MCF 10A (cell line): ENCODE measurements at regions of chr2 and their contacts with region 1.

Region 1: DNA sequence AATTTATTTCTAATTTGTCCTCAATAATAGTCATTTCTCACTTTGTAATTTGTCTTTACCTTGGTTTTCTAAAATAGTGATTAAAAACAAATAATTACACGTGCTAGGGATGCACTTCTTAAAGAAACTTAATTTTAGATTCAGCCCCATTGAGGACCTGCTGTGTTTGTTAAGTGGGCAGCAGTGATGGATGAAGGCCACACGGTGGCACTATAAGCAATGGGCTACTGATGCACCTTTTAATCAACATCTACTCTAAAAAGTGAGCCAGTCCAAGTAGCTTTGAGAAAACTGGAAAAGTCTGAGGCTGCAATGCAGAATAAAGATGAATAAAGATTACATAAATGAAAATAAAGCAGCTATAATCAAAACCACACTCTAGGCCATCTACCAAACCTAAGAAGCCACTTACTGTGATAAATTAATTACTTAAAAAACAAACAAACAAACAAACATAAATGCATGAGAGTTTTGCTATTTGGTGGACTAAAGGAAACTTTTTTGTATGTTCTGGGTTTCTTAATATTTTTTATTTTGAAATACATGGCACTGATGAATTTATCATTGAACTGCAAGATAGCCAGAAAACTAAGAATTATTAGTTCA is 89.3 kb downstream of the PDE11A start:
- DNase-seq: peak; percentile 76
- H3K4me3 Mint-ChIP-seq: no peak overlapping the region
- H3K27ac Mint-ChIP-seq: no peak overlapping the region
- H3K4me1 Mint-ChIP-seq: no peaks in the 10 kb centered on the region
- H3K27me3 Mint-ChIP-seq: peaks cover 26% of the 10 kb centered on the region
- CTCF ChIP-seq: peak; percentile 65

Region 2: GRCh38 chr2:177353187-177353478 is 630.2 kb before region 1 on chr2:
- CTCF ChIA-PET with region 1: no interaction called
- POLR2A ChIA-PET with region 1: no interaction called
- intact Hi-C with region 1: no loop called
- DNase-seq: no peak
- H3K4me3 Mint-ChIP-seq: no peak overlapping the region
- H3K27ac Mint-ChIP-seq: no peak overlapping the region
- H3K4me1 Mint-ChIP-seq: no peaks in the 10 kb centered on the region
- H3K27me3 Mint-ChIP-seq: no peaks in the 10 kb centered on the region
- CTCF ChIP-seq: no peak

Region 3: GRCh38 chr2:177812708-177813396 is 170.4 kb before region 1 on chr2:
- CTCF ChIA-PET with region 1: interaction called, 7 read pairs
- POLR2A ChIA-PET with region 1: no interaction called
- intact Hi-C with region 1: loop called (anchors 10 kb)
- DNase-seq: no peak
- H3K4me3 Mint-ChIP-seq: no peak overlapping the region
- H3K27ac Mint-ChIP-seq: no peak overlapping the region
- H3K4me1 Mint-ChIP-seq: no peaks in the 10 kb centered on the region
- H3K27me3 Mint-ChIP-seq: peaks cover 30% of the 10 kb centered on the region
- CTCF ChIP-seq: no peak

Region 4: GRCh38 chr2:177872286-177872685 is 111.0 kb before region 1 on chr2:
- CTCF ChIA-PET with region 1: no interaction called
- POLR2A ChIA-PET with region 1: no interaction called
- intact Hi-C with region 1: no loop called
- DNase-seq: no peak
- H3K4me3 Mint-ChIP-seq: no peak overlapping the region
- H3K27ac Mint-ChIP-seq: no peak overlapping the region
- H3K4me1 Mint-ChIP-seq: no peaks in the 10 kb centered on the region
- H3K27me3 Mint-ChIP-seq: no peaks in the 10 kb centered on the region
- CTCF ChIP-seq: no peak

Region 5: GRCh38 chr2:178069551-178069950 is 86.3 kb after region 1 on chr2:
- CTCF ChIA-PET with region 1: interaction called, 4 read pairs
- POLR2A ChIA-PET with region 1: no interaction called
- intact Hi-C with region 1: loop called (anchors 5 kb)
- DNase-seq: no peak
- H3K4me3 Mint-ChIP-seq: no peak overlapping the region
- H3K27ac Mint-ChIP-seq: no peak overlapping the region
- H3K4me1 Mint-ChIP-seq: peaks cover 19% of the 10 kb centered on the region
- H3K27me3 Mint-ChIP-seq: peaks cover 47% of the 10 kb centered on the region
- CTCF ChIP-seq: no peak